Astrocyte of the cerebellum (primary cell): ENCODE measurements at regions of chr1 and their contacts with region 1.

Region 1: DNA sequence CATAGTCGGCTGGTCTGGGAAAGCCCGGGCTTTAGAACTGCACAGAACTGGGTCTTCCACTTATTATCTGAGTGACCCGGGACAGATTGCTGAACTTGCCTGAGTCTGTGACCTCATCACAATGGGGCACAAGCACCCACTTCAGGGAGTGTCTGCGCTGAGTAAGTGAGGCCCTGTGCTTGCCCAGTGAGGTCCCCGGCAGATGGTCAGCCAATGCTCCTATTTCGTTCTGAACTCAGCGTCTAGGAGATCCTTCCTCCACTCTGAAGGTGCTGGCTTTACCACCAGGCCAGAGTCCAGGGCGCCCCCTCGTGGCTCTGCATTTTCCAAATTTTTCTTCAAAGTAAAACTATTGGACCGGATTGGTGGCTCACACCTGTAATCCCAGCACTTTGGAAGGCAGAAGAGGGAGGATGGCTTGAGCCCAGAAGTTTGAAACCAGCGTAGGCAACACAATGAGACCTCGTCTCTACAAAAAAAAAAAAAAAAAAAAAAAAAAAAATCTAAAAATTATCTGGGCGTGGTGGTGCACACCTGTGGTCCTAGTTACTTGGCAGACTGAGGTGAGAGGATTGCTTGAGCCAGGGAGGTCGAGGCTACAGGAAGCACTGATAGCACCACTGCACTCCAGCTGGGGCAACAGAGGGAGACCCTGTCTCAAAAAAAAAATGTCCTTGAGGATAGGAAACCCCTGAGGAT is 61.7 kb downstream of the FCRL5 start:
- DNase-seq: peak; percentile 22
- H3K4me3 ChIP-seq: no peak overlapping the region
- CTCF ChIP-seq: peak; percentile 72

Region 2: DNA sequence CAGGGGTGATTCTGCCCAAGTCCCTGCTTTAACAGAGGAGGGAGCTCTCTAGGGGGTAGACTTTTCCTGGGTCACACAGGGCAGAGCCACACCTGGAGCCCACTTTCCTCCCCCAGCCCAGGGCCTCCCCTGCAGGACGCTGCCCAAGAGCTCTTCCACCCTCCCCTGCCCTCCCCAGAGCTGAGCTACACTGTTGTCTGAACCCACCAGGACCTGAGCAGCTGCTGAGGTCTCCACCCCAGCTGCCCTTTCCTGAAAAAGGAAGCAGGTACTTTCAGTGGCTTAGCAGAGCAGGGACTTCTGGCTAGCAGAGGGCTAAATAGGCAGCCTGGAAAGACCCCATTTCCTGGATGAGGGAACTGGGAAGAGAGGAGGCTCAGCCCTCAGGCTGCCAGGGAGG is 183.1 kb before region 1 on chr1:
- in situ Hi-C with region 1: no loop called
- DNase-seq: no peak
- H3K4me3 ChIP-seq: no peak overlapping the region
- CTCF ChIP-seq: no peak

Region 3: GRCh38 chr1:157369808-157370521 is 120.7 kb before region 1 on chr1:
- in situ Hi-C with region 1: loop called (anchors 25 kb)
- DNase-seq: peak; percentile 22
- H3K4me3 ChIP-seq: no peak overlapping the region
- CTCF ChIP-seq: peak; percentile 89